Posterior vena cava (tissue), 2 donors: ENCODE measurements at regions of chr2 and their contacts with region 1.

Region 1: DNA sequence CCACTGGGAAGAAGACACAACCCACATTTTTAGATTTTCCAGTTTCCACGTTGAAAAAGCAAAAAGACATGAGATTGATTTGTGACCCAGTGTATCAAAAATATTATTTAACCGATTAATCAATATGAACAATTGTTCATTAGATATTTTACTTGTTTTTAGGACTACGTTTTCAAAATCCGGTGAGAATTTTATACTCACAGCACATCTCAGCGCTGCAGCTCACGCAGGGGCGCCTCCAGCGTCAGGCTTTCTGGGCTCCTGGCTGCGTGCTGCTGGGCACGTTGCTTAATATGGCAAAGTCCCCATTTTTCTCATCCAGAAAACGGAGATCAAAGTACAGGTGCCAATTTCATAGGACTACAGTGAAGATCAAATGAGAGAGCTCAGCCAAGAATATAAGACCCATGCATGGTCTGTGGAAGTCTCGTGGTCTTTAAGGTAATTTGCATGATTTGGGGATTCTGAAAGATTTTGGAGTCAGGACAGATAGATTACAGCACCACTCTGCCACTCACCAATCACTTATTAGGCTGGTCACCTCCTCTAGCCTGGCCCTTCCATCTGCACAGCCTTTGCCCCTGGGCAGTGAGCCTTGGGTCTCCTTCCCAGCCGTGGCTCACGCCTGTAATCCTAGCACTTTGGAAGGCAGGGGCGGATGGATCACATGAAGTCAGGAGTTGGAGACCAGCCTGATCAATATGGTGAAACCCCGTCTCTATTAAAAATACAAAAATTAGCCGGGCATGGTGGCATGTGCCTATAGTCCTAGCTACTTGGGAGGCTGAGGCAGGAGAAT is 36.2 kb downstream of the PTPN18 start:
- DNase-seq: peak; percentile 81

Region 2: GRCh38 chr2:130355578-130356431 is 36.3 kb before region 1 on chr2 and contains the start of gene PTPN18:
- intact Hi-C with region 1: no loop called
- DNase-seq: peak; percentile 97
- total RNA-seq, gene PTPN18: 33.6 to 58.7 TPM

Region 3: GRCh38 chr2:130369311-130369964 is 22.6 kb before region 1 on chr2:
- intact Hi-C with region 1: loop called in 1 of 2 experiments (anchors 1 kb)
- DNase-seq: no peak